ENCODE measurements at regions of chr17 and their contacts with region 1.

Region 1: DNA sequence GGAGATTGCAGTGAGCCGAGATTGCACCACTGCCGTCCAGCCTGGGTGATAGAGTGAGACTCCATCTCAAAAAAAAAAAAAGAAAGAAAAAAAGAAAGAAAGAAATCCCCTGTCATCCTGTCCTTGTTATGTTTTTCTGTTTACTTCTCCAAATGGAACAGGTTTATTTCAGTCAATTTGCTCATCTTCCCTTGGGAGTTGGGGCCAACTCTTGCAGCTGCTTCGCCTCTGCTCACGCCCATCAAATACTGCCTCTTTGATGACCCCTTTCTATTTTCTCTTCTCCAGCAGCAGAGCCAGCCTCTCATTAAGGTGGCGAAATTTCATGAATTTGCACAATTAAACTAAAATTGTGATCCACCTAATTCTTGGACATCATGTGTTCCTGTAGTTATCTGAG is 173.4 kb downstream of the ZNF18 start:
- DNase-seq: no peak
- ATAC-seq: no peak
- H3K4me3 Mint-ChIP-seq: no peak overlapping the region
- H3K27ac Mint-ChIP-seq: no peak overlapping the region
- H3K4me1 Mint-ChIP-seq: no peaks in the 10 kb centered on the region
- H3K27me3 Mint-ChIP-seq: no peaks in the 10 kb centered on the region

Region 2: DNA sequence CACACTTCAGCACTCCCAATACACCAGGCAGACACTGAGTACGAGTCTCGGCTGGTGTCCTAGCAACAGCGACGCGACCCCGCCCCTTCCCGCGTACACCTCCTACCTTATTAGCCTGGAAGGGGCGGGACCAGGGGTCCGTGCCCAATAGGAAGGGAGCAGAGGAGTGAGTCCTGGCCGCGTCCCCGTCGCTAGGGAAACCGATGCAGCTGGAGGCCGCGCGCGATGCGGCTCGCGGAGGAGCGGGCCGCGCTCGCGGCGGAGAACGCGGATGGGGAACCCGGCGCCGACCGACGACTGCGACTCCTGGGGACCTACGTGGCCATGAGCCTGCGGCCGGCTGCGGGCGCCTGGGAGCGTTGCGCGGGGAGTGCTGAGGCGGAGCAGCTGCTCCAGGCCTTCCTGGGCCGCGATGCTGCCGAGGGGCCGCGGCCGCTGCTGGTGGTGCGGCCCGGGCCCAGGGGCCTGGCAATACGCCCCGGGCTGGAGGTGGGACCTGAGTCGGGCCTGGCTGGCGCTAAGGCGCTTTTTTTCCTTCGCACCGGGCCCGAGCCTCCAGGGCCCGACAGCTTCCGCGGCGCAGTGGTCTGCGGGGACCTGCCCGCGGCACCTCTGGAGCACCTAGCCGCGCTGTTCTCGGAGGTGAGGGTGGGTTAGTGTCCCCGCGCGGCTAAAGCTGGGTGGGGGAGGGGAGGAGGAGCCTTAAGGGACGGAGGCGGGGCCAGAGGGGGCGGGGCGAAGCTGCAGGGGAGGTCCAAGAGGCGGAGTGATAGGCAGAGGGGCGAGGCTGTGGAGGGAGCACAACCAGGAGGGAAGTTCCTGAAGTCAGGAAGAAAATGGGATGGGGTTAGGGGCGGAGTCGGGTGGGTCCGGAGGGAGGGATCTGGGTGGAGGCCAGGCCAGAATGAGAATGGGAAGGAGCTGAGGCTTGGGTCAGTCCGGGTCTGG is 225.3 kb before region 1 on chr17 and contains the start of gene DNAH9:
- CTCF ChIA-PET with region 1: no interaction called
- POLR2A ChIA-PET with region 1: no interaction called
- intact Hi-C with region 1: no loop called
- DNase-seq: peak; percentile 57
- ATAC-seq: peak; percentile 61
- H3K4me3 Mint-ChIP-seq: no peak within 1 kb of the TSS
- H3K27ac Mint-ChIP-seq: no peak within 1 kb of the TSS
- H3K4me1 Mint-ChIP-seq: peaks cover 2% of the 10 kb centered on the region
- H3K27me3 Mint-ChIP-seq: peaks cover 22% of the 10 kb centered on the region
- total RNA-seq, gene DNAH9: not detected

Region 3: GRCh38 chr17:11768106-11768505 is 55.8 kb before region 1 on chr17:
- CTCF ChIA-PET with region 1: no interaction called
- POLR2A ChIA-PET with region 1: no interaction called
- intact Hi-C with region 1: loop called in 1 of 2 experiments (anchors 10 kb)
- DNase-seq: no peak
- ATAC-seq: no peak
- H3K4me3 Mint-ChIP-seq: no peak overlapping the region
- H3K27ac Mint-ChIP-seq: no peak overlapping the region
- H3K4me1 Mint-ChIP-seq: no peaks in the 10 kb centered on the region
- H3K27me3 Mint-ChIP-seq: no peaks in the 10 kb centered on the region